Common myeloid progenitor, CD34-positive (primary cell): ENCODE measurements at regions of chr14 and their contacts with region 1.

Region 1: DNA sequence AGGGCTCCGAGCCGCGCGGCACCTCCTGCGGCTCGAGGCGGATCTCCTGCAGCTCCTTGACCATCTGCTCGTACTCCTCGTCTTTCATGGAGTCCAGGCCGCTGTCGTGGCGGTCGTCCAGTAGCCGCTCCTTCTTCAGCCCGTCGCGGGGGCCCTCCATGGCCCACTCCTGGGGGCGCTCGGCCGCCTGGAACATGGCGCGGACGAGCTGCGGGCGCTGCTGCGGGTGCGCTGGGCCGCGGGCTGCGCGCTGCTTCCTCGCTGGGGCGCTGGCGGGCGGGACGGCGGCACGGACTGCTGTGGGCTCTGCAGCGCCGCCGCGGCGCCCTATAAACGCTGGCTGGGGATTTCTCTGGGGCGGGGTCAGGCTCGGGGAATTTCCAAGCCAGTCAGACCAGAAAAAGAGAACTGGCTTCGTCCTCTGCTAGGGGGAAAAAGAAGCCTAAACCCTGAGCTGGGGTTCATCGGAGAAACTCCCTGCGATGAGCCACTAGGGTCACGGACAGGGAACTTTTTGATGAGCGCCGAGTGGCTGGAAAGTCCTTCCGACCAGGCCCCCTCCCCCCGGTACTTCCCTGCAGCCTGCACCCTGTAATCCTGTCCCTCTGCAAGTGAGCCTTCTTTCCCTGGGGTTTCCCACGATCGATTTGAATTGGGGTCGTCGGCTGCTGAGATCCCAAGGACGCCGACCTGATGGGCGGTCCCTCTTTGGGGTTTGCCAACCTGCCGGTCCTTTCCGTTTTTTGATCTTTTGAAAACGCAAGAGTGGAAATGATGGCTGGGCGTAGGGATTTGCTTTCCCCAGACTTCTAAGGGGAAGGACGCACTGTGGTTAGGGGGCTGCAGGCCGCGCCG is at the start of gene NFKBIA:
- DNase-seq: peak; percentile 94 to 97 (median 97)
- H3K4me3 ChIP-seq: peak within 1 kb of the TSS; percentile 84 to 97 (median 87)
- H3K27ac ChIP-seq: peak within 1 kb of the TSS; percentile 93 to 94
- H3K4me1 ChIP-seq: peaks cover 40 to 53% (median 51%) of the 10 kb centered on the region in 4 experiments
- H3K27me3 ChIP-seq: no peaks in the 10 kb centered on the region

Region 2: GRCh38 chr14:35140718-35141581 is 263.7 kb before region 1 on chr14:
- CTCF ChIA-PET with region 1: interaction called, 213 read pairs
- POLR2A ChIA-PET with region 1: no interaction called
- DNase-seq: peak in 2 of 3 donors; percentile 47 to 66
- H3K4me3 ChIP-seq: no peak overlapping the region
- H3K27ac ChIP-seq: no peak overlapping the region
- H3K4me1 ChIP-seq: no peaks in the 10 kb centered on the region
- H3K27me3 ChIP-seq: no peaks in the 10 kb centered on the region

Region 3: DNA sequence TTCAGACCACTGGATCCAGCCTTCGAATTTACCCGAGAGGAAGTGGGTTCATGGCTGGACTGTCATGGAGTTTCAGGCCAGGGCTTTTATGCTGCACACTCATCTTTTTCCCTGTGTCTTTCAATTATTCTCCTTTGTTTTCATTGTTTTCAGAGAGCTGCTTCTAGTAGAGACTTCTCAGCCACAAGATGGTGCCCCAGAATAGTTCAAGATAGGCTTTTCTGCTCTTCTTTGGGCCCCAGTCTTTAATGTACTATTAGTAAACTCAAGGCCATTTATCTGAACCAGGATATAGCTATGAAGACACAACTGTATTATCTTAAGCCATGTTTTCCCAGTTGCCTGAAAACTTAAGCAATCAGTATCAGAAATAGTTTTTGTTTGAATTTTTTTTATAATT is 142.9 kb before region 1 on chr14:
- CTCF ChIA-PET with region 1: interaction called, 22 read pairs
- POLR2A ChIA-PET with region 1: interaction called, 7 read pairs
- DNase-seq: peak; percentile 53 to 68 (median 67)
- H3K4me3 ChIP-seq: no peak overlapping the region
- H3K27ac ChIP-seq: no peak overlapping the region
- H3K4me1 ChIP-seq: peaks cover 0 to 4% (median 0%) of the 10 kb centered on the region in 4 experiments
- H3K27me3 ChIP-seq: no peaks in the 10 kb centered on the region

Region 4: DNA sequence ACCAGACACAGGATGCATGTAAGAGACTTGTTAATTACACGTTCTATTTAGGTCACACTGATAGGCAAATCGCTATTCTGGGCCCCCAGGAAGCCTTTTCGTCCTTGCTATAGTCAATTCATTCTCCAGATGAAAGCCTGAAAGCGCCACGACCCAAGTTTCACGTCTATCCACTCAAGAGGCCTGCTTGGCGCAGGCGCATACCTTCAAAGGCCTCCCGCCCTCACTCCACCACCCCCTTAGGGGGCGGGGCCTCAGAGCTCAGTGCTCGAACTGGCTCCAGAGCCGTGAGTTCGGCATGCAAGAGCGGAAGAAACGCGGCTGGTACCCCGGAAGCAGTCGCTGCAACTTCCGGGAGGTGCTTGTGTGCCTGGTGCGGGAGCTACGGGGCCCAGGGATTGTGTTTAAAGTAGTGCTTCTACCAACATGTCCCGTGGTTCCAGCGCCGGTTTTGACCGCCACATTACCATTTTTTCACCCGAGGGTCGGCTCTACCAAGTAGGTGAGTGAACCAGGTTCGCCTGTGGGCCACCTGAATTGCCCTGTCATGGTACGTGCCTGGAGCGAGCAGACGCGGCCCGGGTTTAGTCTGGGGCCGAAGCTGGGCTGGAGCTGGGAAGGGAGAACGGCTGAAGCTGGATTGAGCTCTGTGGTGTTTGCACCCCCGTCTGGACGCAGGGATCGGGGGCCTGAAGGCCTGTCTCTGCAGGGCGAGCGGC is 112.5 kb before region 1 on chr14 and contains the start of gene PSMA6:
- CTCF ChIA-PET with region 1: interaction called, 10 read pairs
- POLR2A ChIA-PET with region 1: interaction called, 27 read pairs
- DNase-seq: peak; percentile 99
- H3K4me3 ChIP-seq: peak within 1 kb of the TSS; percentile 85 to 97 (median 90)
- H3K27ac ChIP-seq: peak within 1 kb of the TSS; percentile 89 to 95
- H3K4me1 ChIP-seq: peaks cover 38 to 88% (median 74%) of the 10 kb centered on the region in 4 experiments
- H3K27me3 ChIP-seq: no peaks in the 10 kb centered on the region

Region 5: DNA sequence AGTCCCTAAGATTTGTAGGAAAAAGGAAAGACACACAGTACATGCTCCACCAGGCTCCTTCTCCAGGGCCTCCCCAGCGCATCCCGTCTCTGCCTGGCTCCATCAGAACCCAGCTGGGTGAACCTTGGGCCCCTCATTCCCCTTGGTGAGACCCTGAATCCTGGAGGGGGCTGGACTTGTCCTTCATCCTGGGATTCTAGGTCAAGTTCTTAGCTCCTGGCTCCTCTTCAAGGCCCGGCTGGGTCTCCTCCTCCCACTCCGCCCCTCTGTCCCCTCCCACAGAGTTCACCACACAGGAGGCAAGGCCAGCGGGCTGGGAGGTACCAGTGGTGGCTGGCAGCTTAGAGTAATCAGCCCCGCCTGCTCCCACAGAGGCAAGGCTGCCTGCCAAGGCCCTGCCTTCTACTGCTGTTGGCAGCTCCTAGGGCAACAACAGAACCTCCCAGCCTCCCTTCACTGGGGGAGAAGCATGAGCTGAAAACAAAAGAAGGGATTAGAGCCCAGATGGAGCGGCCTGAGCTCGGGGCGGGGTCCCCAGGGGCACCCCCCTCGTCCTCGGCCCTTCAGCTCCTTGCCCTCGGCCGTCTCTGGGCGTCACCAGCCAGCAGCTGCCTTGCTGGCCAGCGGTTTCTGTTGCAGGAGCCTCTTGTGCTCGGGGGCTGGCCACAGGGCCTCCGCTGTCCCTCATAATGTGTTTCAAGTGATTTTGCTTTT is 63.1 kb before region 1 on chr14:
- CTCF ChIA-PET with region 1: interaction called, 5 read pairs
- POLR2A ChIA-PET with region 1: interaction called, 12 read pairs
- DNase-seq: peak; percentile 86 to 96 (median 95)
- H3K4me3 ChIP-seq: peak overlapping the region in 2 of 7 experiments; percentile 33 to 58
- H3K27ac ChIP-seq: peak overlapping the region; percentile 43 to 76
- H3K4me1 ChIP-seq: peaks cover 10 to 70% (median 64%) of the 10 kb centered on the region in 4 experiments
- H3K27me3 ChIP-seq: no peaks in the 10 kb centered on the region

Region 6: DNA sequence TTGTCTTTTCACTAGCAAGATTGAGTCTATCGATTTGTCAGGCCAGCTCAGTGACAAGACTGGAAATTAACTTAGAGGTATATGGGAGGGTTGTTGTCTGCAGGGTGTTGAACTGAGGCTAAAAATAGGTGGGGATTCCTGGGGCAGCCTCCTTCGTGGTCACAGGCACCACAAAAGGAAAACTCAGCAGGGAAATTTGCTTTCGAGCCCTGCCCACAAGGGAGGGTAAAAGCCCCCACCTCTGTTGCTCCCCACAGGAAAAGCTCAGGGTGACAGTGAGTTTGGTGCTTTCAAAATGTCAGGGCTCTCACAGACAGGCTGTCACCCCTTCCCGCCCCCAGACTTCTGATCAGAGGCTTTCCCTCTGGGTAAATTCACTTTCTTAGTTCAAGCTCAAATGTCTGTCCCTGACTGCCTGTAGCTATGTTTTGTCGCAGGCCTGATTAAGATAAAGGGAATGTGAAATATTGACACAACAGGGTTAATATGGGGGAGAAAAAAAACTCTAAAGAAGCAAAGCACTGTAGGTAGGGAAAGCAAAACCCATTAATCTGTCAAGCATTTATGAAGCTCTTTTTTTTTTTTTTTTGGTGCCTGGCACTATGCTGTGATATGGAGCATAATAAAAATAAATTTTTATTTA is 11.6 kb after region 1 on chr14:
- CTCF ChIA-PET with region 1: interaction called, 10 read pairs
- POLR2A ChIA-PET with region 1: interaction called, 7 read pairs
- DNase-seq: peak in 2 of 3 donors; percentile 25 to 31
- H3K4me3 ChIP-seq: peak overlapping the region in 4 of 7 experiments; percentile 2 to 41 (median 20)
- H3K27ac ChIP-seq: peak overlapping the region in 1 of 2 experiments; percentile 49
- H3K4me1 ChIP-seq: peaks cover 0 to 22% (median 18%) of the 10 kb centered on the region in 4 experiments
- H3K27me3 ChIP-seq: no peaks in the 10 kb centered on the region

Region 7: GRCh38 chr14:35459776-35460175 is 55.1 kb after region 1 on chr14:
- CTCF ChIA-PET with region 1: no interaction called
- POLR2A ChIA-PET with region 1: no interaction called
- DNase-seq: no peak
- H3K4me3 ChIP-seq: no peak overlapping the region
- H3K27ac ChIP-seq: no peak overlapping the region
- H3K4me1 ChIP-seq: peaks cover 0 to 2% (median 0%) of the 10 kb centered on the region in 4 experiments
- H3K27me3 ChIP-seq: no peaks in the 10 kb centered on the region